ENCODE measurements at regions of chr2 and their contacts with region 1.

Region 1: GRCh38 chr2:10434886-10435819 is 13.0 kb downstream of the ODC1 start:
- DNase-seq: peak; percentile 80 to 91
- ATAC-seq: peak; percentile 60 to 87
- H3K4me3 ChIP-seq: no peak overlapping the region
- H3K27ac ChIP-seq: peak overlapping the region in 1 of 2 experiments; percentile 68; a peak in 4 of 6 replicates
- H3K4me1 ChIP-seq: peaks cover 18% of the 10 kb centered on the region
- CTCF ChIP-seq: peak; percentile 99
- EP300 ChIP-seq: no peak
- POLR2A ChIP-seq: no peak
- RAD21 ChIP-seq: peak; percentile 100

Region 2: GRCh38 chr2:10036095-10036884 is 398.9 kb before region 1 on chr2:
- CTCF ChIA-PET with region 1: interaction called, 13 read pairs
- POLR2A ChIA-PET with region 1: no interaction called
- DNase-seq: peak; percentile 84 to 95
- ATAC-seq: peak; percentile 88 to 94
- H3K4me3 ChIP-seq: no peak overlapping the region
- H3K27ac ChIP-seq: peak overlapping the region; percentile 53 to 83
- H3K4me1 ChIP-seq: peaks cover 16% of the 10 kb centered on the region
- CTCF ChIP-seq: peak; percentile 62
- EP300 ChIP-seq: no peak
- POLR2A ChIP-seq: no peak
- RAD21 ChIP-seq: peak; percentile 43; a peak in 3 of 5 replicates

Region 3: DNA sequence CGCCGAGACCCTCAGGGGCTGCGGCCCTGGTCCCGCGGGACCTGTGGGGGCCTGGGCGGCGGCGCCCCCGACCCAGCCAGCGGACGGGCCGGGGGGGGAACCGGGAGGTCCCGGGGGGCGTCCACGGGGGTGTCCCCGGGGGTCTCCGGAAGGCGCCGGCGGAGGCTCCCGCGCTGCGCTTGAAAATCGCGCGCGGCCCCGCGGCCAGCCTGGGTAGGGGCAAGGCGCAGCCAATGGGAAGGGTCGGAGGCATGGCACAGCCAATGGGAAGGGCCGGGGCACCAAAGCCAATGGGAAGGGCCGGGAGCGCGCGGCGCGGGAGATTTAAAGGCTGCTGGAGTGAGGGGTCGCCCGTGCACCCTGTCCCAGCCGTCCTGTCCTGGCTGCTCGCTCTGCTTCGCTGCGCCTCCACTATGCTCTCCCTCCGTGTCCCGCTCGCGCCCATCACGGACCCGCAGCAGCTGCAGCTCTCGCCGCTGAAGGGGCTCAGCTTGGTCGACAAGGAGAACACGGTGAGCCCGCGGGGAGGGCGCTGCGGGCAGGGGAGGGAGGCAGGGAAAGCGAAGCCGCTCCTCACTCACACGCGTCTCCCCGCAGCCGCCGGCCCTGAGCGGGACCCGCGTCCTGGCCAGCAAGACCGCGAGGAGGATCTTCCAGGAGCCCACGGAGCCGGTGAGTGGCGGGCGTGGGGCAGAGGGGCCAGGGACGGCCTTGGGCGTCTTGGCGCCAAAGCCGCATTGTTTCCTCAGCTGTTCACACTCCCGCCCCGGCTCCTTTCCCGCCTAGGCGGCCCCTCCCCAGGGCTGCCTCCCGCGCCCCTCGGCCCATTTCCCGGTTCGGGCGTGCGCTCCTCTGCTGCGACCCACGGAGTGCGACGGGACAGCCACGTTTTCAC is 312.5 kb before region 1 on chr2 and contains the start of gene RRM2:
- CTCF ChIA-PET with region 1: interaction called, 322 read pairs
- POLR2A ChIA-PET with region 1: interaction called, 3 read pairs
- DNase-seq: peak; percentile 97
- ATAC-seq: peak; percentile 73 to 88
- H3K4me3 ChIP-seq: peak within 1 kb of the TSS; percentile 76
- H3K27ac ChIP-seq: peak within 1 kb of the TSS; percentile 88 to 95
- H3K4me1 ChIP-seq: peaks cover 30% of the 10 kb centered on the region
- CTCF ChIP-seq: no peak
- EP300 ChIP-seq: no peak
- POLR2A ChIP-seq: peak; percentile 91
- RAD21 ChIP-seq: no peak
- polyA plus RNA-seq, gene RRM2: 65.1 and 84.4 TPM in 2 replicates

Region 4: DNA sequence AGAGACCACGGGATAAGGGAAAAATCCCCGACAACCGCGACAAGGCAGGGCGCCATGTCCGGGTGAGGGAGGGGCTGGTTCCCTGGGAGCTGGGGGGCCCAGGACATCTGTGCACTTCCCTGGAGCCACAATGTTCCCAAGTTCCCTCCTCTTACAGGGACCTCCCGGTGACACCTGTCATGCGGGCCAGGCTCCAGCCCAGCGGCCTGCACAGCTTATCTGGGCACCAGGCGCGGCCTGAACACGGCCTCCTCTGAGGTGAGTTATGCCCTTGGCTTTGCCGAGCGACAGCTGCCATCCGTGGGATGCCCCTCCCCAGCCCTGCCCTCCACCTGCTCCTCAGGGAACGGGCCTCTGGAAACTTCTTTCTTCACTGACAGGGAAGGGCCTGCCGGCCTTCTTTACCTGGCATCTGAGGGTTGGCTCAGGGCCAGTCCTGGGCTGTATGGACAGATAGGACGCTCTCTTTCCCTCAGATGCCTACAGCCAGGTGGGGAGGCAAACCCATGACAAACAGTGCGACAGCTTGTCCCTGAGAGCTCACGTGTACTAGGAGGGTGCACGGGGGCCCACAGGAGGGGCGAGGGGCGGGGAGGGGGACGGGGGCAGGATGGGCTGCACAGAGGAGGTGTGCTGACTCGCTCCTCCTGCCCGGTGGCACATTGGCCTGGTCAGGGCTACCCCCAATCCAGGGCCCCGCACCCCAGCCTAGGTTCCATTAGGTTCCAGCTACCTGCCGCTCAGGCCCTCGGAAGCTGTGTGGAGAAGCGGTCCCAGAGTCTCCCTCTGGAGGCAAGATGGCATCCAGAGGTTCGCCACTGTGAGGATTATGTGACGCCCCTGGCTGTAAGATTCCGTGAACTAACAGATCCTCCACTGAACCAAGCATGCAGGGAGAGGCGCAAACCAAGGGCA is 167.3 kb before region 1 on chr2:
- CTCF ChIA-PET with region 1: interaction called, 30 read pairs
- POLR2A ChIA-PET with region 1: no interaction called
- DNase-seq: no peak
- ATAC-seq: no peak
- H3K4me3 ChIP-seq: no peak overlapping the region
- H3K27ac ChIP-seq: no peak overlapping the region; a peak in 1 of 6 replicates
- H3K4me1 ChIP-seq: peaks cover 22% of the 10 kb centered on the region
- CTCF ChIP-seq: no peak
- EP300 ChIP-seq: no peak
- POLR2A ChIP-seq: no peak
- RAD21 ChIP-seq: no peak

Region 5: DNA sequence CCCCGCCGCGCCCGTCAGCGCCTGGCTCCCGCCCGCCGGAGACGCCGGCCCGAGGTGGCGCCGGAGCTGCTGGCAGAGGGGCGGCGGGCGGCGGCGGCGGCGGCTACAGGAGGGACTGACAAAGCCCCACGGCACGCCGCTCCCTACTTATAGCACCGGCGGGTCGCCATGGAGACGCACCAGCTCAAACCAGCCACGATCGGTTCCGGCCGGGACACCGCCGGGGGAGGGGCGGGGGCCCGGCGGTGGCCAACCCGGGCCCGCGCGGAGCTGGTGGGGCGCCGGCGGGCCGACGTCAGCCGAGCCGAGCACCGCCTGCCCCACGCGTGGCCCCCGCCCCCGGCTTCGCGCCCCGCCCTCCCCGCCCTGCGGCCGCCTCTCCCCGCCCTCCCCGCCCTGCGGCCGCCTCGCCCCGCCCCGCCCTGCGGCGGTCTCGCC is 13.1 kb after region 1 on chr2 and contains the start of gene ODC1:
- CTCF ChIA-PET with region 1: interaction called, 74 read pairs
- POLR2A ChIA-PET with region 1: interaction called, 24 read pairs
- DNase-seq: peak; percentile 80 to 93
- ATAC-seq: peak; percentile 69 to 72
- H3K4me3 ChIP-seq: peak within 1 kb of the TSS; percentile 78
- H3K27ac ChIP-seq: peak within 1 kb of the TSS; percentile 90 to 98
- H3K4me1 ChIP-seq: peaks cover 56% of the 10 kb centered on the region
- CTCF ChIP-seq: no peak
- EP300 ChIP-seq: no peak; a peak in 2 of 5 replicates
- POLR2A ChIP-seq: peak; percentile 59
- RAD21 ChIP-seq: no peak
- polyA plus RNA-seq, gene ODC1: 198 and 265 TPM in 2 replicates

Region 6: DNA sequence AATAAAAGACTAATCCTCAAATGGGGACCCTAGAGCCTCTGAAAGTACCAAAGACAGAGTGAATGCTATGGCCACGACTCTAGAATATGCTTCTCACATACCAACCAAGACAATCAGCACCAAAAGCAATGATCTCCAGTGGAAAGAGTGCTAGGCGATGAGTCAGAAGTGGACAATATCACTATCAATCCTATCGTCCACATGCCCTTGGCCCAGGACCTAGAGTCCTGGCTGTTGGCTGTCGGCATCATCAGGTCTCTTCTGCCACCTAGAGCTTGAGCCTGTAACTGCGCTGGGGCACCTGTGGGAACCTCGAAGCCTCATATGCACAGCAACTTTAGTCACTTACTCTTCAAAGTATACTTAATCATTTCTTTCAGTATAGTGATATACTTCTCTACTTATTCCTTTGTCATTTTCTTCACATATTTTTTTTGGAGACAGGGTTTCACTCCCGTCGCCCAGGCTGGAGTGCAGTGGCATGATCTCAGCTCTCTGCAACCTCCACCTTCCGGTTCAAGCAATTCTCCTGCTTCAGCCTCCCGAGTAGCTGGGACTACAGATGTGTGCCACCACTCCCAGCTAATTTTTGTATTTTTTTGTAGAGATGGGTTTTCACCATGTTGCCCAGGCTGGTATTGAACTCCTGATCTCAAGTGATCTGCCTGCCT is 224.9 kb after region 1 on chr2:
- CTCF ChIA-PET with region 1: interaction called, 12 read pairs
- POLR2A ChIA-PET with region 1: no interaction called
- DNase-seq: peak; percentile 65 to 69
- ATAC-seq: peak; percentile 92 to 95
- H3K4me3 ChIP-seq: no peak overlapping the region
- H3K27ac ChIP-seq: no peak overlapping the region
- H3K4me1 ChIP-seq: no peaks in the 10 kb centered on the region
- CTCF ChIP-seq: peak; percentile 72
- EP300 ChIP-seq: no peak
- POLR2A ChIP-seq: no peak
- RAD21 ChIP-seq: peak; percentile 81 to 83

Measured in A549 (cell line).